GM10248 (cell line): ENCODE measurements at regions of chrX and their contacts with region 1.

Region 1: GRCh38 chrX:154013614-154014360 is 5.9 kb downstream of the IRAK1 start:
- DNase-seq: peak; percentile 67
- CTCF ChIP-seq: peak; percentile 71

Region 2: DNA sequence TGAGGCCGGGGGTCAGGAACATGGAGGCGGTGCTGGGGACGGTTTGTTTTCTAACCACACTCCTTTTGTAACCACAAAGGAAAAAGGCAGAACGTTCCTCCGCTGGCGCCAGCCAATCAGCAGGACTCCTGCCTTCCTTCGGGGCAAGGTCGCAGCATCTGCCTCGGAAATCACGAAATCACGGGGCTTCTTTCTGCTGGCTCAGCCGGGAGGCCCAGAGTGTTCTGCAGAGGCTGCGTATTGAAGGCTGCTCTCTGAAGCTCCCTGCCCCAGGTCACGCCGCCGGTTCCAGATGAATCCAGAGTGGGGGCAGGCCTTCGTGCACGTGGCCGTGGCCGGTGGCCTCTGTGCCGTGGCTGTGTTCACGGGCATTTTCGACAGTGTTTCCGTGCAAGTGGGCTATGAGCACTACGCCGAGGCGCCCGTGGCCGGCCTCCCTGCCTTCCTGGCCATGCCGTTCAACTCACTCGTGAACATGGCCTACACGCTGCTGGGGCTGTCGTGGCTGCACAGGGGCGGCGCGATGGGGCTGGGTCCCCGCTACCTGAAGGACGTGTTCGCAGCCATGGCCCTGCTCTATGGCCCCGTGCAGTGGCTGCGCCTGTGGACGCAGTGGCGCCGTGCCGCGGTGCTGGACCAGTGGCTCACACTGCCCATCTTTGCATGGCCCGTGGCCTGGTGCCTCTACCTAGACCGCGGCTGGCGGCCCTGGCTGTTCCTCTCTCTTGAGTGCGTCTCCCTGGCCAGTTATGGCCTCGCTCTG is 31.8 kb before region 1 on chrX:
- CTCF ChIA-PET with region 1: interaction called, 13 read pairs
- POLR2A ChIA-PET with region 1: no interaction called
- DNase-seq: no peak
- CTCF ChIP-seq: no peak

Region 3: DNA sequence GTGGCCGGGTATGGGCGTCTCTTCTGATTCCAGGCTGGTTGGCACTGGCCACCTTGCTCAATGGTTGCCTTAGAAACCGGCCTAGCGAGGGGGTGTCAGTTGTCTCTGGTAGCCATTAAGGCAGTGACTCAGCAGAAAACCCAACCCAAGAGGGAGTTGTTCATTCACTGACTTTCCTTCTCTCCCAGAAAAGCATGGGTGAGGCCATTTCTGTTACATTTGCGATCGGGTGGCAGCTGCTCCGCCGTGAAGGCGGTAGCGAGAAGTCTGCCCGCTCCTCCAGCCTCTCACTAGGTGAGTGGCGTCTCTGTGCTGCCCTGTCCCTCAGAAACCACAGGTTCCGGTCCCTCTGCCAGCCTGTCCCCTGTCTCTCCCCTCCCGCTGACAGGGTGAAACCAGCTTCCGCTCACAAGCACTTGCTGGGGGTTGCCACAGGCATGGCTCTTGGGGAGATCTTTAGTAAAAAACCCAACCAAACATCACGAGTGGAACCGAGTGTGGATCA is 11.5 kb before region 1 on chrX:
- CTCF ChIA-PET with region 1: interaction called, 17 read pairs
- POLR2A ChIA-PET with region 1: no interaction called
- DNase-seq: no peak
- CTCF ChIP-seq: no peak

Region 4: DNA sequence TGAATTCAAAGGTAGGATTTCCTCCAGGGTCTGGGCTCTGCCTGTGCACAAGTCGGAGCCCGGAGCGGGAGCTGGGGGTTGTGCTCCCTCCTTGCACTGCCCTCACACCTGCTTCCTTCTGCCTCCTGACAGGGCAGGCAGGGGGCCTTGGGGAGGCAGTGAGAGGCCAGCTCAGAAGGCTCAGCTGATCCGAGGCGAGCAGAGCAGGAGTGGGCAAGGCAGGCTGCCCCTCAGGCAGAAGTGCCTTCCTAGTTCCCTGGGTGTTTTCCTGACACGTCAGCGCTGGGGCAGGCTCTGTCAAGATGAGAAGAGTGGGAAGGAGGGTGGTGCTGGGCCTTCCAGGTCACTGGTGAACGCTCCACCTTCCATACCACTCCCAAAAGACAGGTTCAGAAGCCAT is 11.4 kb after region 1 on chrX:
- CTCF ChIA-PET with region 1: interaction called, 18 read pairs
- POLR2A ChIA-PET with region 1: no interaction called
- DNase-seq: no peak
- CTCF ChIP-seq: no peak

Region 5: DNA sequence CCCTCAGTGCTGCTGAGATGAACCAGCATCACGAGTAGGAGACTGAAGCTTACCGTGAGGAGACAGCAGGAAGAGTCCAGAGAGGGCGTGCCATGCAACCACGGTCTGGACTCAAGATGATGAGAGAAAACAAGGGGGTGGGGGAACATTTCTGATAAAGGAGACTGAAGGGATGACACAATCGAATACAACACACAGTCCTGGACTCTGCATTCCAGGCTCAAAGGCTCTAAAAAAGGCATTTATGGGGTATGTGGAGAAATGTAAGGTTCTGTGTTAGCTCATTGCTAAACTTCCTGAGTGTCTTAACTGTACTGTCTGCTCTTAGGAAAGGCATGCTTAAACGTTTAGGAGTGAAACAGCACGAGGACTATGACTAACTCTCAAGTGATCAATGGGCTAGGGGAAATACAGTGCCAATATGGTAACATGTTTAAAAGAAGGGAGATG is 26.5 kb after region 1 on chrX:
- CTCF ChIA-PET with region 1: interaction called, 12 read pairs
- POLR2A ChIA-PET with region 1: no interaction called
- DNase-seq: no peak
- CTCF ChIP-seq: no peak